Heart left ventricle (tissue), 16 donors: ENCODE measurements at regions of chr7 and their contacts with region 1.

Region 1: GRCh38 chr7:42831718-42832431 is 80.0 kb downstream of the C7orf25 start:
- DNase-seq: peak in 4 of 5 donors; percentile 21 to 42 (median 34)
- ATAC-seq: peak; percentile 42 to 75 (median 72)
- H3K4me3 ChIP-seq: no peak overlapping the region
- H3K27ac ChIP-seq: peak overlapping the region in 1 of 12 donors; percentile 18
- H3K4me1 ChIP-seq: peaks cover 0 to 9% (median 1%) of the 10 kb centered on the region in 12 donors
- H3K27me3 ChIP-seq: peaks cover 0 to 7% (median 0%) of the 10 kb centered on the region in 9 donors
- CTCF ChIP-seq: peak; percentile 29 to 81 (median 64)
- POLR2A ChIP-seq: no peak

Region 2: DNA sequence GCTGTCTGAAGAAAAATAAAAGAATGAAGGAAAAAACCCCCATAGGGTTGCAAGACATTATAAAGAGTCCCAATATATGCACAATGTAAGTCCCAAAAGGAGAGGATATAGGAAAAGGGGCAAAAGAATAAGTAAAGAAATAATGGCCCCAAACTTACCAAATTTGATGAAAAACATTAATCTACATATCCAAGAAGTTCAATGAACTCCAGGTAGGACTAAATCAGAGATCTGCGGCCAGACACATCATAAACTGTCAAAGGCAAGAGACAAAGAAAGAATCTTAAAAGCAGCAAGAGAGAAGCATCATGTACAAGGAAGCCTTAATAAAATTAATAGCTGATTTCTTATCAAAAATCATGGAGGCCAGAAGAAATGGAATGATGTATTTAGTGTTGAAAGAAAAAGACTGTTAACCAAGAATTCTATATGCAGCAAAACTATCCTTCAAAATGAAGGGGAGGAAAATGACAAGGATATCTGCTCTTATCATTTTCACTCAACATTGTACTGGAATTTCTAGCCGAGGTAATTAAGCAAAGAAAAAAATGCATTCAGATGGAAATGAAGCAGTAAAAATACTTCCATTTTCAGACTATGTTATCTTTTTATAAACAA is 499.2 kb before region 1 on chr7:
- intact Hi-C with region 1: no loop called
- DNase-seq: no peak
- ATAC-seq: no peak
- H3K4me3 ChIP-seq: no peak overlapping the region
- H3K27ac ChIP-seq: no peak overlapping the region
- H3K4me1 ChIP-seq: no peaks in the 10 kb centered on the region
- H3K27me3 ChIP-seq: no peaks in the 10 kb centered on the region
- CTCF ChIP-seq: no peak
- POLR2A ChIP-seq: no peak

Region 3: DNA sequence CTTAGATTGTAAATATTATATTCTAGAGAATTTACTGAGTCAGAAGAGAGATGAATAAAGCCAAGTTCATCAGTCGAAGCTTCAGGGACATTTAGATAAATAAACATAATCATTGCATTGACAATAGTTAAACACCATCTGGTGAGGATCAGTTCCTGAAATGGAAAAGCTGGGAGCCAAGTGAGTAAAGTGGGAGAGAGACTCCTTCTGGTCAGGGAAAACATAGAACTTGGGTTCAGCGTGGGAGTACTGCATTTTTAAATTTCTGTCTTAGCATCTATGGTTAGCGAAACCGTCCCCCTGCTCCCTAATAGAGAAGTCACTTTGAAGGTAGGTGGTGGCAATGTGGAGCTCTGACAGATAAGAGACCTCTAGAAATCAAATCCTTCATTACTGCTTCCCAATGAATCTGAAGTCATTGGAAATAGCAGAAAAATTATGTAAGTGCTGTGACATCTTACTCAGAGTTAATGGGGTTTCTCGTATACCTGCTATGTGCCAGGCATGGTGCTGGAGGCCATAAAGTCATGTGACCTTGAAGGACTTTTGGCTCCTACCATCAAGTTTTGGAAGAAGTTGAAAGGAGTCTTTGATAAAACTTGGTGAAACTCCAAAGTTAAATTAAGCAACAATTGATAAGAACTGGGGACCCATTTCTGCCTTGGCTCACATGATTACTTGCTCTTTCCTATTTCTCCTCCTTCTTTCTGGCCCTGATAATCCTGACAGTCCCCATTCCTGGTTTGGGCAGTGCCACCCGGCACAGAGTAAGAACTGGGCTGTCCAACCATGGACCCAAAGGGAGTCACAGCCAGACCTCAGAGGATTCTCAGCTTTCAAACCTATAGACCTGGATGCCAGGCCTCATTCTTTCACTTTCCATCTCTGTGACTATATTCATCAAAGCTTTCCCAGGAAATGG is 131.2 kb before region 1 on chr7:
- intact Hi-C with region 1: loop called in 3 of 10 experiments (anchors 10 kb)
- DNase-seq: no peak
- ATAC-seq: peak in 2 of 4 donors; percentile 50 to 69
- H3K4me3 ChIP-seq: no peak overlapping the region
- H3K27ac ChIP-seq: peak overlapping the region in 1 of 12 donors; percentile 17
- H3K4me1 ChIP-seq: peaks cover 0 to 32% (median 8%) of the 10 kb centered on the region in 12 donors
- H3K27me3 ChIP-seq: no peaks in the 10 kb centered on the region
- CTCF ChIP-seq: peak in 3 of 12 donors; percentile 12 to 33 (median 31)
- POLR2A ChIP-seq: no peak

Region 4: DNA sequence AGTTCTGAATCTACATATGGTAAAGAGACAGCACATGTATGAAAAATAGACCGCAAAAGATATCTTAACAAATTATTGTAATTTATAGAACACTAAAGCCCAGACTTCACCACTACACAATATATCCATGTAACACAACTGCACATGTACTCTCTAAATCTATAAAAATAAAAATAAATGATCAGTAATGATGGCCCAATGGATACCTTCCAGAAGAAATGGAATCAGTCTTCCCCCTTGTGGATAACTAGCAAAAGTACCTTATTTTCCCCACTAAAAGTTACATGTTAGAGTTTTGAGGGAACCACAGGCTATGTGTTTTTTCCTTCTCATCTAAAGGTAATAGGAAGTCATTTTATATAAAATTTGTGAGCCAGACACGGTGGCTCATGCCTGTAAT is 54.3 kb after region 1 on chr7:
- intact Hi-C with region 1: no loop called
- DNase-seq: no peak
- ATAC-seq: no peak
- H3K4me3 ChIP-seq: no peak overlapping the region
- H3K27ac ChIP-seq: no peak overlapping the region
- H3K4me1 ChIP-seq: peaks cover 0 to 19% (median 4%) of the 10 kb centered on the region in 12 donors
- H3K27me3 ChIP-seq: no peaks in the 10 kb centered on the region
- CTCF ChIP-seq: peak in 5 of 12 donors; percentile 11 to 23 (median 16)
- POLR2A ChIP-seq: no peak